K562 (cell line): ENCODE measurements at regions of chr21 and their contacts with region 1.

Region 1: DNA sequence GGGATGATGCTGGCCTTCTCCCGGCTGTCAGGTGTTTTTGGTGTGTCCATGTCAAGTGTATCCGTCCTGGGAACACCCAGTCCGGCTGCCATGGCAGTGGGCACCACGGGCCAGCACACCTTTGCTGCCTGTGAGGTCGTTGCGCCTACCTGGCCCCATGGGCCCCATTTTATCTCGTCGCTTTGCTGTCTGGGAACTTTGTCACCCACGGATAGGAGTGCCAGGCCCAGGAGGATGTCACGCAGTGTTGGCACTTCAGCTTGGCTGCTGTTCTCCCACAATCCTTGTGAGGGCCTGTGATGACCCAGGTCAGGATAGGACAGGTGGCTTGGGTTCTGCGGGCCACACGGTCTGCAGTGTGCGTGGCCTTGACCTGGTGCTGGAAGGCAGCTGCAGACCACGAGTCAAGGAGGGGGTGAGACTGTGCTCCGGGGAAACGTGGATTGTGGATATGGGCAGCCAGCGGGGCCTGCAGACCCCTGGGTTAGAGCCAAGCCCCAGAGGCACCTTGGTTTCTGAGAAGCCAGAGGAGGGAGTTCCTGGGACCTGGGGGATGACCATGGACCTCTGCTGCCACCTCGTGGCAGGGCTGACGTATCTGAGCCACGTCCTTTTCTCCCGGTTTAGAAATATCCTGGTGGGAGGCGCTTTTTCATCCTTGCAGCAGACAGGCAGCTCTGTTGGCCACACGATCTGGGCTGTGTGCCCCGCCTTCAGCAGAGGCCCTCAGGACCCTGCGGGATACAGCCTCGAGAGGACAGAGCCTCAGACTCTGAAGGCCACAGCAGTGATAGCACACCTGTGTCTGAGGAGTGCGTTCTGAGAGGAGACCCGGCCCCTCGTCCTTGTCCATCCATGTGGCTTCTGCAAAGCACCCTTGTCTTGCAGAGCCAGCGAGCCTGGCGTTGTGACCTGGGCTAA is 161.1 kb upstream of the COL6A1 start:
- DNase-seq: peak; percentile 91 to 96 (median 95)
- ATAC-seq: peak; percentile 96
- H3K4me3 ChIP-seq: no peak overlapping the region
- H3K27ac ChIP-seq: no peak overlapping the region
- H3K4me1 ChIP-seq: peaks cover 0 to 7% of the 10 kb centered on the region in 2 experiments; a peak in 2 of 5 replicates
- H3K27me3 ChIP-seq: peaks cover 29 to 67% of the 10 kb centered on the region in 2 experiments
- CTCF ChIP-seq: peak; percentile 94 to 98 (median 95)
- EP300 ChIP-seq: no peak
- POLR2A ChIP-seq: no peak
- RAD21 ChIP-seq: peak; percentile 84 to 95

Region 2: DNA sequence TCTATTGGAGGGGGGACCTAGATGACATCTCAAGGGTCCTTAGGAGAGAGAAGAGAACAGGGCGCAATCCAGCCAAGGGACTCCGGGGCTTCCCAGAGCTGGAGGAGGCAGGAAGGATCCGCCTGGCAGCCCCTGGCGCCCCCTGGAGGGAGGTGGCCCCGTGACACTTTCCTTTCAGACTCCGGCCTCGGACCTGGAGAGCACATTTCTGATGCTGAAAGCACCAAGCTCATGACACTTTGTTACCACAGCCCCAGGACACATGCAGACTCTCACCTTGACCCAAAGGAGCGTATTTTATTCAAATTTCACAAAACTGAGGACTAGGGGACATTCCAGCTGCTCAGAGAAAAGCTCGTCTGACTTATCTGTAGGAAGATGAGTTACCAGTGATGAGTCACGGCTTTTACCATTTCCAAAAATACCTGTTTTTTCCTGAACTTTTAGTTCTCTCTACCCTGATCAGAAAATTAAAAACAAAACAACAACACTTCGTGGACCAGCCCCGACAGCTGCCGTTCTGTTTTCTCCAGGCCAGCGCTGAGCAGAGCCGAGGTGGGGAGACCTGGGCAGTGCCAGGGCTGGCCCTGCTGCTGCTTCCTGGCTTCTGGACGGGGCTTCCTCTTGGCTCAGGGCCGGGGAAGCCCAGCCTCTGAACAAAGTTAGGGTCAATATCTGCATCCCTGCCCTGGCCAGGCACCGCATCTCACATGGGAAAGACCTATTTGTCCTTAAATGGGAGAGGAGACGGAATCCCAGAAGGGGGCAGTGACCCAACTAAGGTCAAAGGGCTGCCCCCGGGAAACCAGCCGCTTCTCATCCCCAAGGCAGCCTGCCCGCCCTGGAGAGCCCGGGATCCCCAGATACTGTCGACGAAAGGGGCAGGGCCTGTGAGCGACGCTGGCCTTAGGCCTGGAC is 511.1 kb before region 1 on chr21:
- CTCF ChIA-PET with region 1: interaction called, 3 read pairs
- POLR2A ChIA-PET with region 1: no interaction called
- in situ Hi-C with region 1: loop called (anchors 10 kb)
- intact Hi-C with region 1: no loop called
- DNase-seq: peak; percentile 78 to 82 (median 81)
- ATAC-seq: peak; percentile 89
- H3K4me3 ChIP-seq: no peak overlapping the region
- H3K27ac ChIP-seq: no peak overlapping the region
- H3K4me1 ChIP-seq: peaks cover 20 to 32% of the 10 kb centered on the region in 2 experiments; a peak in 4 of 5 replicates
- H3K27me3 ChIP-seq: peaks cover 13 to 66% of the 10 kb centered on the region in 2 experiments; a peak in 4 of 5 replicates
- CTCF ChIP-seq: peak; percentile 87 to 99 (median 90)
- EP300 ChIP-seq: no peak
- POLR2A ChIP-seq: no peak
- RAD21 ChIP-seq: peak; percentile 45 to 80

Region 3: GRCh38 chr21:45448810-45449657 is 371.4 kb before region 1 on chr21:
- CTCF ChIA-PET with region 1: no interaction called
- POLR2A ChIA-PET with region 1: no interaction called
- in situ Hi-C with region 1: no loop called
- intact Hi-C with region 1: loop called (anchors 5 kb)
- DNase-seq: no peak
- ATAC-seq: no peak
- H3K4me3 ChIP-seq: no peak overlapping the region
- H3K27ac ChIP-seq: no peak overlapping the region
- H3K4me1 ChIP-seq: peaks cover 0 to 32% of the 10 kb centered on the region in 2 experiments; a peak in 1 of 5 replicates
- H3K27me3 ChIP-seq: peaks cover 0 to 14% of the 10 kb centered on the region in 2 experiments; a peak in 3 of 5 replicates
- CTCF ChIP-seq: no peak
- EP300 ChIP-seq: no peak
- POLR2A ChIP-seq: no peak
- RAD21 ChIP-seq: no peak